Dorsolateral prefrontal cortex (tissue), 120 donors: ENCODE measurements at regions of chr7 and their contacts with region 1.

Region 1: DNA sequence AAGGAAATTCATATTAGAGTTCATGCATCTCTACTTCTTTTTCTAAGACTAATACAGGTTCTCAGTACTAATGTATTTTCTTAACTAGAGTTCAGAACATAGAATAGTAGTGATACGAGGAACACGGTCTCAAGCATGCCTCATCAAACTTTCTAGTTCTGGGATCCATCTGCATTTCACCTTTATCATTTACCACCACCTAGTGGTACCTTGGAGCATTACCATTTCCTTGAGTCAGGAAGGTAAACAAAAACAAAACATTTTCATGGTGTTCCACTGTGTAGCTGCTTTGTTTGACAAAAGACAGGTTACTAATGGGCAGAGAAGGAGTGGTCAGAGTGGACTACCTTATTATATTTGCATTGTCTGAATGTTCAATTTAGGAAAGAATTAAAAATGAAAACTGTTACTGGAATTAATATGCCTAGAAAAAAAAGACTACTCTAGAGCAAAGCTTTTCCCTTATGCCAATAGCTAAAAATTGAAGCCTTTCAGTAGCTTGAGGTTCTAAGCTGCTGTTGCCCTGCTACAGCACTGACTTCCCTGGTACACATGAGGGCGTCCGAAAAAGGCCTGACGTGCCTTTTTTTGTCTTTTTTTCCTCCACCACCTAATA is 44.5 kb downstream of the STARD3NL start:
- DNase-seq: peak in 1 of 10 donors; percentile 36
- H3K4me3 ChIP-seq: no peak overlapping the region
- H3K27ac ChIP-seq: peak overlapping the region in 3 of 59 donors; percentile 4 to 29 (median 25)
- H3K27me3 ChIP-seq: no peaks in the 10 kb centered on the region
- CTCF ChIP-seq: peak; percentile 73 to 95 (median 88)

Region 2: DNA sequence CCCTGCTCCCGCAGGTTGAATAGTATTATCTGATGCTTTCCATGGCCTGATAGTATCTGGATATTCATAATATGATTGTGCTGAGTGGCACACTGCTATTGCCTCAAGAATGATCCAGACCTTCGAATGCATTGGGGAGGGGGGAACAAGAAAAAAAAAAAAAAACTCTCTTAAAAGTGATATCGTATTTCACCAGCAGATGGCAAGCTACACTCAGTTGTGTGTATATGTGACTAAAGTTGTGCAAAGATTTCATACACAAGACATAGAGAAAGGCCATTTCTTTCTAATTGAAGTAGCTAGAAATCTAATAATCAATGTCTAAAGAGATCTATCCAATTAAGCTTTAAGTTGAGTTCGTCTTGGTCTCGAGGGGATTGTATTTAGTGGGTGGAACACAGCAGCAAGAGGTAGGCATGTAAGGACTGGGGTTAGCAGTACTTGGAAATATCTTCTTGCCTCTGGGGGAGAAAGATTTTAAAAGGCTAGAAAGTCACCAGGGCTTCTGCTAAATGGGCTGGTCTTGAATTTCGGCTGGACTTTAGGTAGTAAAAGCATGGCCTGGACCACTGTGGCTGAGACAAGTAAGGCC is 321.3 kb before region 1 on chr7:
- intact Hi-C with region 1: loop called in 1 of 2 experiments (anchors 2 kb)
- DNase-seq: no peak
- H3K4me3 ChIP-seq: no peak overlapping the region
- H3K27ac ChIP-seq: no peak overlapping the region
- H3K27me3 ChIP-seq: no peaks in the 10 kb centered on the region
- CTCF ChIP-seq: peak; percentile 43 to 83 (median 66)